Right cardiac atrium (tissue), 5 donors: ENCODE measurements at regions of chr11 and their contacts with region 1.

Region 1: DNA sequence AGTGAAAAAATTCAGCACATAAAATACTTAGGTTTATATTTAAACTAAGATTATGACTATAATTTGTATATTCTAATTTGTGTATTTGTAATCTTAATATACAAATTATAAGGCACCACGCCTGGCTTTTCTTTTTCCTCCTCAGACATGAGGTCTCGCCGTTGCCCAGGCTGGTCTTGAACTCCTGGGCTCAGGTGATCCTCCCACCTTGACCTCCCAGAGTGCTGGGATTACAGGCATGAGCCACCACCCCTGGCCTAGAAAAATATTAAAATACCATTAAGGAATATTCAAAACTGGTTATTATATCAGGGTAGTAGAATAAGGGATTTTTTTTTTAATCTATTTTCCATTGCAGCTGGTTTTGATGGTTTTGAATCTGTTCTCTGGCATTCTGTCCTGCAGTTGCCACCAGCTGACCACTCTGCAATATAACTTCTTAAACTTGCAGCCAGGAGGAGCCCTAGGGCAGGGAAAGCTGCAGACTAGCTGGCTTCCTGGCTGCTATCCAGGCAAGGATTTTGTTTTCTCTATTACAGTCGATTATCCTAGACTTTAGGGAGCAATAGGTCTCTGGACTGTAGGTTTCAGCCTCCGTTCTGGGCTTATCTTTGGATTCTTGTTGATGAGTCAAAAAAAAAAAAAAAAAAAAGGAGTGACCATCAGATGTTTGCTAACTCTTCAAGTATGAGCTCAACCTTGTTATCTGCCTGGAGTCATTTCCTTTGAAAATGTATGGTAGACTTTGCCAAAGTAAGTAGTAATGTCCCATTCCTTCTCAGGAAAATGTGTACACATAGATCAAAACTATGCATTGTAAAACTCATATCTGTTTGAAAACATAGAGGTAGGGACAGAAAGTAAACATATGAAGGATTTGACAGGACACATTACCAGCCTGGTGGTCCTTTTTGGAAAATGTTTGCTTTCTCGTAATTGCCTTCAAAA is 13.2 kb downstream of the POLA2 start:
- DNase-seq: peak; percentile 76 to 79 (median 78)
- ATAC-seq: peak; percentile 91 to 93
- H3K4me3 ChIP-seq: no peak overlapping the region
- H3K27ac ChIP-seq: no peak overlapping the region
- H3K4me1 ChIP-seq: no peaks in the 10 kb centered on the region
- H3K27me3 ChIP-seq: no peaks in the 10 kb centered on the region

Region 2: GRCh38 chr11:65314501-65315203 is 39.6 kb after region 1 on chr11 and contains the start of gene CDC42EP2:
- intact Hi-C with region 1: loop called (anchors 1 to 5 kb)
- DNase-seq: peak; percentile 91 to 96 (median 96)
- ATAC-seq: peak; percentile 91 to 95
- H3K4me3 ChIP-seq: peak within 1 kb of the TSS; percentile 84
- H3K27ac ChIP-seq: peak within 1 kb of the TSS; percentile 84
- H3K4me1 ChIP-seq: peaks cover 10% of the 10 kb centered on the region
- H3K27me3 ChIP-seq: no peaks in the 10 kb centered on the region
- total RNA-seq, gene CDC42EP2: 9.1 to 21.2 (median 10.7) TPM